Activated CD4-positive, alpha-beta T cell treated with anti-CD3 and anti-CD28 coated beads for 36 hours (primary cell): ENCODE measurements at regions of chr5 and their contacts with region 1.

Region 1: GRCh38 chr5:150778517-150779396 is at the start of gene SMIM3:
- DNase-seq: peak; percentile 87
- ATAC-seq: peak; percentile 60
- H3K4me3 Mint-ChIP-seq: peak within 1 kb of the TSS; percentile 99
- H3K27ac Mint-ChIP-seq: peak within 1 kb of the TSS; percentile 96
- H3K4me1 Mint-ChIP-seq: peaks cover 49% of the 10 kb centered on the region
- H3K27me3 Mint-ChIP-seq: peaks cover 3% of the 10 kb centered on the region
- total RNA-seq, gene SMIM3: 16.8 to 16.9 TPM

Region 2: DNA sequence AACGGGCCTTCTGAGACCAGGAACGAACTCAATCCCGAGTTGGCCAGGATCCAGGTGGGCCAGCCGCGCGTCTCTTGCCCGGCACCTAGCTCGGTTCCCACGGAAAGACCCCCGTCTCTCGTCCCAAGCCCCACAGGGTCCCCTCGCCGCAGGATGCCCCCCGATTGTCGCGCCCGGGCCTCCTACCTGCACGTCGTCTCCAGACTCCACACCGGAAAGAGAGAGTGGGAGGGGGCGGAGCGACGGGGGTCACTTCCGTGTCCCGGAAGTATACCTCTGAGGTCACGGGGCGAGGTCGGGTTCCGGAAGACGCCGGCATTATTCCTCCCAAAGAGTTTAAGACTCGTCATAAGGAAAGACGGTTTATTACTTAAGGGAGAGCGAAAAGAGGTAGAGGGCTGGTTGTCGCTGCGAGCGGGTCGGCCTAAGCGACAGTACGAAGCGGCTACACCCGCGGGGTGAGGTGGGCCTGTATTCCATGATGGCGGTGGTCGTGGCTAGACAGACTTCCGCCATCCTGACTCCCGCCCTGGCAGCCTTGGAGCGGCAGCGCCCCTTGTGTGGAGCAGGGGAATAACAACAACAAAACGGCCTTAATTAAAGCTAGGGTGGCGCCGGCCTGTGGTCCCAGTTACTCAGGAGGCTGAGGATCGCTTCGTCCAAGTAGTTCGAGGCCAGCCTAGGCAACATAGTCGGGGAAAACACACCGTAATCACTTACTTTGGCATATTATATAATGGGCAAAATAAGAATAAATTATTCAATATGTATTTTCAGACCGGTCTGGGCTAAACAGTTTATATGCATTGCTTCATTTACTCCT is 329.0 kb before region 1 on chr5 and contains the start of gene RPS14:
- CTCF ChIA-PET with region 1: interaction called, 3 read pairs
- POLR2A ChIA-PET with region 1: interaction called, 3 read pairs
- intact Hi-C with region 1: loop called in 1 of 2 experiments (anchors 5 kb)
- DNase-seq: peak; percentile 96
- ATAC-seq: peak; percentile 93
- H3K4me3 Mint-ChIP-seq: peak within 1 kb of the TSS; percentile 95
- H3K27ac Mint-ChIP-seq: peak within 1 kb of the TSS; percentile 99
- H3K4me1 Mint-ChIP-seq: peaks cover 31% of the 10 kb centered on the region
- H3K27me3 Mint-ChIP-seq: no peaks in the 10 kb centered on the region
- total RNA-seq, gene RPS14: 2,270 to 3,312 TPM

Region 3: GRCh38 chr5:150560401-150561193 is 218.2 kb before region 1 on chr5:
- CTCF ChIA-PET with region 1: interaction called, 9 read pairs
- POLR2A ChIA-PET with region 1: no interaction called
- intact Hi-C with region 1: loop called (anchors 1 to 5 kb)
- DNase-seq: peak; percentile 92
- ATAC-seq: peak; percentile 97
- H3K4me3 Mint-ChIP-seq: no peak overlapping the region
- H3K27ac Mint-ChIP-seq: no peak overlapping the region
- H3K4me1 Mint-ChIP-seq: no peaks in the 10 kb centered on the region
- H3K27me3 Mint-ChIP-seq: no peaks in the 10 kb centered on the region

Region 4: DNA sequence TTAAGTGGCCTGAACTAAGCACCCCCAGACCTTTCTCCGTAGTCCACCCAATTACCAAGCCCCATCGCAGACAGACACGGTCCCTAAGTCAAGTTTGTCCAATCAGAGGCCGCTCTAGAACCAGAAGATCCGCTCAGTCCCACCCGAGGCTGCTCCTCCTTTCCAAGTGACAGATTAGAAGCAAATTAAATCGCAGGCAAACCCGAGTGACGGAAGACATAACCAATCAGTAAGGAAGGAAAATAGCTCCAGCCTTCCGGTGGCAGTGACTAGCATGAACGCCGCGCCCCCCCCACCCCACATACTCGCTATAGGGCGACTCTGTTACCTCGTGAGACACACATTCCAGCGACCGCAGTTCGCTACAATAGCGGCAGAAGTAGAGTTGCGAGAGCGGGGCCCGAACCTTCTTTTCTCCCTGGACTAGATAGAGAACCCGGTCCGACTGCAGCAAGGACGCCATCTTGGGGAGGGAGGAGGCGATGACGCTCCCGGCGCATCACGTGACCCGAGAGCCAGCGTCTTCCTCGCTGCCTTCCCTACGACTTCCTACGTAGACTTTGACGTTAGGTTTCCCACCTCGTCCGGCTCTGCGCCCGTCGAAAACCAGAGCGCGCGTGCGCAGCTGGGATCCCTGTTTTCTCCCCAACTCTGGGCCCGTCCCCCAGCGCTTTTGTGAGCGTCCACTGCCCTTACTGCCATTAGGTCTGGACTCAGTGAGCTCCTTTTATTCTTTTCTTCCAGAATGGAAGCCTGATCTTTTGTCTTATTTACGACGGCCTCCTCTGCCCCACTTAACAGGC is 20.0 kb before region 1 on chr5 and contains the start of gene DCTN4:
- CTCF ChIA-PET with region 1: interaction called, 18 read pairs
- POLR2A ChIA-PET with region 1: interaction called, 6 read pairs
- intact Hi-C with region 1: loop called (anchors 1 kb)
- DNase-seq: peak; percentile 96
- ATAC-seq: peak; percentile 96
- H3K4me3 Mint-ChIP-seq: no peak within 1 kb of the TSS
- H3K27ac Mint-ChIP-seq: no peak within 1 kb of the TSS
- H3K4me1 Mint-ChIP-seq: peaks cover 37% of the 10 kb centered on the region
- H3K27me3 Mint-ChIP-seq: no peaks in the 10 kb centered on the region
- total RNA-seq, gene DCTN4: 31.7 to 49.0 TPM

Region 5: GRCh38 chr5:150801117-150801927 is 22.6 kb after region 1 on chr5:
- CTCF ChIA-PET with region 1: interaction called, 10 read pairs
- POLR2A ChIA-PET with region 1: no interaction called
- intact Hi-C with region 1: no loop called
- DNase-seq: peak; percentile 26
- ATAC-seq: peak; percentile 78
- H3K4me3 Mint-ChIP-seq: no peak overlapping the region
- H3K27ac Mint-ChIP-seq: no peak overlapping the region
- H3K4me1 Mint-ChIP-seq: peaks cover 22% of the 10 kb centered on the region
- H3K27me3 Mint-ChIP-seq: no peaks in the 10 kb centered on the region

Region 6: DNA sequence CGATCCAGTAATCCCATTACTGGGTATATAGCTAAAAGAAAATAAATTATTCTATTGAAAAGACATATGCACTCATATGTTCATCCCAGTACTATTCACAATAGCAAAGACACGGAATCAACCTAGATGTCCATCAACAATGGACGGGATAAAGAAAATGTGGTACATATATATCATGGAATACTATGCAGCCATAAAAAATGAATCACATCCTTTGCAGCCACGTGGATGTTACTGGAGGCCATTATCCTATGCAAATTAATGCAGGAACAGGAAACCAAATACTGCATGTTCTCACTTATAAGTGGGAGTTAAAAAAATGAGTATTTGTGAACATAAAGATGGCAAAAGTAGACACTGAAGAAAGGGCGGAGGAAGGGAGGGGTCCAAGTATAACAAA is 51.0 kb after region 1 on chr5:
- CTCF ChIA-PET with region 1: no interaction called
- POLR2A ChIA-PET with region 1: no interaction called
- intact Hi-C with region 1: no loop called
- DNase-seq: no peak
- ATAC-seq: no peak
- H3K4me3 Mint-ChIP-seq: no peak overlapping the region
- H3K27ac Mint-ChIP-seq: no peak overlapping the region
- H3K4me1 Mint-ChIP-seq: no peaks in the 10 kb centered on the region
- H3K27me3 Mint-ChIP-seq: no peaks in the 10 kb centered on the region

Region 7: GRCh38 chr5:151080623-151081430 is 302.1 kb after region 1 on chr5 and contains the start of gene TNIP1:
- CTCF ChIA-PET with region 1: no interaction called
- POLR2A ChIA-PET with region 1: no interaction called
- intact Hi-C with region 1: loop called (anchors 2 to 10 kb)
- DNase-seq: peak; percentile 96
- ATAC-seq: peak; percentile 67
- H3K4me3 Mint-ChIP-seq: peak within 1 kb of the TSS; percentile 80
- H3K27ac Mint-ChIP-seq: peak within 1 kb of the TSS; percentile 91
- H3K4me1 Mint-ChIP-seq: peaks cover 74% of the 10 kb centered on the region
- H3K27me3 Mint-ChIP-seq: no peaks in the 10 kb centered on the region
- total RNA-seq, gene TNIP1: 351 to 408 TPM